ENCODE measurements at regions of chr20 and their contacts with region 1.

Region 1: DNA sequence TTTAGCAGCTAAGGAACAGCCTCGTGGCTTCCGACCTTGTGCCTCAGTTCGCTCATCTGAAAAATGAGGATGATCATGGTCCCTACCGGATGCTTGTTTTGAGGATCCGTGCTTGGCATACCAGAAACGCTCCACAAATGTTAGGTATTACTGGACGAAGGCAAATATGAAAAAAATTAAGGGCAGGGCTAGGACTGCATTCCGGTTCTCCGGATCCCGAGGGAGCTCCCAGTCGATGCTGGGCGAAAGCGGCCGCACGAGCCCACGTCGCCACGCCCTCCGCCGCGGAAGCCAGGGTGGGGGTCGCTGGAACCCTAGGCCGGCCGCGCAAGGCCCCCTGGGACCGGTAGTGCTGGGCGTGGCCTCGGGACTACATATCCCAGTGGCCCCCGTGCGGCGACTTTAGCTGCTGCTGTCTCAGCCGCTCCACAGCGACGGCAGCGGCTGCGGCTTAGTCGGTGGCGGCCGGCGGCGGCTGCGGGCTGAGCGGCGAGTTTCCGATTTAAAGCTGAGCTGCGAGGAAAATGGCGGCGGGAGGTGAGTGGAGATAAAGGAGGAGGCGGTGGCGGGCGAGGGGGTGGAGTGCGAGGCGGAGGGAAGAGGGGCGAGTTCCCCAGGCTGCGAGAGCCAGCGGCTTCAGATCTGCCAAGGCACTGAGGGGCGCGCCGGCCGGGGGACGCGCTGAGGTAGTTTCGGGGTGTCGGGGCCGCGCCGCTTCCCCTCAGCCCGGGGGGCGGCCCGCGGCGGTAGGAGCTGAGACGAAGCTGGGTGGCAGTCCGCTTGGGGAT is at the start of gene NCOA3:
- H3K4me3 ChIP-seq: peak within 1 kb of the TSS; percentile 97
- H3K27ac ChIP-seq: peak within 1 kb of the TSS; percentile 90
- H3K4me1 ChIP-seq: peaks cover 6% of the 10 kb centered on the region
- CTCF ChIP-seq: peak; percentile 92

Region 2: DNA sequence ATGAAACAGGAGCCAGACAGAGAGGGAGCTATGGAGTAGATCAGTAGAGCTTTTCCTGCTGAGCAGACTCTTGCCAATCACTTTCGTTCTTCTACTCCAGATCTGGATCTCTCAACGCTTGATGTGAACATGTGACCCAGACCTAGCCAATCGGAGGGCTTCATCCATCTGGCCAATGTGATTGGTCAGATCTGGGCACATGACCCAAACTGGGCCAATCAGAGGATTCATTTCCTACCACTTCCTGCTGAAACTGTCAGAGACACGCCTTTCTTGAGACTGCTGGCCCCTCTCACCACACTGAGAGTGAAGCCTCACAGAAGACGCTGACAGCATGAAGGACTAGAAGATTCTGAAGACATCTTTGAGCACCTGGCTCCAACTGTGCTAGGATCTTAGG is 101.0 kb before region 1 on chr20:
- CTCF ChIA-PET with region 1: no interaction called
- POLR2A ChIA-PET with region 1: interaction called, 10 read pairs
- H3K4me3 ChIP-seq: no peak overlapping the region
- H3K27ac ChIP-seq: no peak overlapping the region
- H3K4me1 ChIP-seq: no peaks in the 10 kb centered on the region
- CTCF ChIP-seq: no peak

Region 3: DNA sequence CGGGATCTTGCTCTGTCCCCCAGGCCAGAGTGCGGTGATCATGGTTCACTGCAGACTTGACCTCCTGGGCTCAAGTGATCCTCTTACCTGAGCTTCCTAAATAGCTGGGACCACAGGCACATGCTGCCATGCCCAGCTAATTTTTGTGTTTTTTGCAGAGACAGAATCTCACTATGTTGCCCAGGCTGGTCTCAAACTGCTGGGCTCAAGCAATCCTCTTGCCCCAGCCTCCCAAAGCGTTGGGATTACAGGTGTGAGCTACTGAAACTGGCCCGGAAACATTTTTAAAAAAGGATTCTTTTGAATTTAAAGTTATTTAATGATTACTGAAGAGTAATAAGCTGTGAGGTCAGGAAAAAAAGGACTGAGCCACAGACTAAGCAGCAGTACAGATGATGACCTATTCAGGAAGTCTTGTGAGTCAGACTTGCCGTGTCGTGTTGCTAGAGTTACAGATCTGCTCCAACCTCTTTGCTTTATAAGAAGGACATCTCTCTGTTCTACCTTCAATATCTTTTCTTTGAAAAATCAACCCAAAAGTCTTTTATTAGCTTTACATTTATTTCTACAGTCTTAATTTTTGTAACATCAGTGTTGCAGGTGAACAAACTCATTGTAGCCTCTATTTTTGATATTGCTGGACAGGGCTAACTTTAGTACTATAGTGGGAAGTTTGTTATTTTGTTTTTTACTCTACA is 108.7 kb after region 1 on chr20:
- CTCF ChIA-PET with region 1: no interaction called
- POLR2A ChIA-PET with region 1: interaction called, 12 read pairs
- H3K4me3 ChIP-seq: no peak overlapping the region
- H3K27ac ChIP-seq: no peak overlapping the region
- H3K4me1 ChIP-seq: peaks cover 6% of the 10 kb centered on the region; the same call in 1 of the 2 replicates
- CTCF ChIP-seq: no peak